ENCODE measurements at regions of chr20 and their contacts with region 1.

Region 1: DNA sequence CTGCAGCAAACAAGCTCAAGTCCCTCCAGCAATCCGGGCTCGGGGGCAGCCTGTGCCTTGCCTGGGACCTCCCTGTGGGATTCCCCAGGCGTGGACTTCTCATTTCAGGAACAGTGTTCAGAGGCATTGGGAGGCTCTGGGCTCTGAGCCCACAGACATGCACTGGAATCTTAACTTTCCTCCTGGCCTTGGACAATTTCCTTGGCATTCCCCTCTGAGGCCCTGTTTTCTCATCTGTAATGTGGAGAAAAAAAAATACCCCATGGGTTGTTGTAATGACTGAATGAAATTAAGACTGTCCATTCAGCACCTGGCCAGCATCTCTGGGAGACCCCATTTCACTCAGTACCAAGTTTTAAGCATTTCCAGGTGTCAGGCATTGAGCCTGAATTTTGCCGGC is 17.6 kb downstream of the BPIFB4 start:
- DNase-seq: no peak
- ATAC-seq: no peak
- H3K4me3 ChIP-seq: no peak overlapping the region
- H3K27ac ChIP-seq: no peak overlapping the region
- H3K4me1 ChIP-seq: no peaks in the 10 kb centered on the region
- H3K27me3 ChIP-seq: peaks cover 3% of the 10 kb centered on the region; the same call in 1 of the 2 replicates
- CTCF ChIP-seq: no peak

Region 2: DNA sequence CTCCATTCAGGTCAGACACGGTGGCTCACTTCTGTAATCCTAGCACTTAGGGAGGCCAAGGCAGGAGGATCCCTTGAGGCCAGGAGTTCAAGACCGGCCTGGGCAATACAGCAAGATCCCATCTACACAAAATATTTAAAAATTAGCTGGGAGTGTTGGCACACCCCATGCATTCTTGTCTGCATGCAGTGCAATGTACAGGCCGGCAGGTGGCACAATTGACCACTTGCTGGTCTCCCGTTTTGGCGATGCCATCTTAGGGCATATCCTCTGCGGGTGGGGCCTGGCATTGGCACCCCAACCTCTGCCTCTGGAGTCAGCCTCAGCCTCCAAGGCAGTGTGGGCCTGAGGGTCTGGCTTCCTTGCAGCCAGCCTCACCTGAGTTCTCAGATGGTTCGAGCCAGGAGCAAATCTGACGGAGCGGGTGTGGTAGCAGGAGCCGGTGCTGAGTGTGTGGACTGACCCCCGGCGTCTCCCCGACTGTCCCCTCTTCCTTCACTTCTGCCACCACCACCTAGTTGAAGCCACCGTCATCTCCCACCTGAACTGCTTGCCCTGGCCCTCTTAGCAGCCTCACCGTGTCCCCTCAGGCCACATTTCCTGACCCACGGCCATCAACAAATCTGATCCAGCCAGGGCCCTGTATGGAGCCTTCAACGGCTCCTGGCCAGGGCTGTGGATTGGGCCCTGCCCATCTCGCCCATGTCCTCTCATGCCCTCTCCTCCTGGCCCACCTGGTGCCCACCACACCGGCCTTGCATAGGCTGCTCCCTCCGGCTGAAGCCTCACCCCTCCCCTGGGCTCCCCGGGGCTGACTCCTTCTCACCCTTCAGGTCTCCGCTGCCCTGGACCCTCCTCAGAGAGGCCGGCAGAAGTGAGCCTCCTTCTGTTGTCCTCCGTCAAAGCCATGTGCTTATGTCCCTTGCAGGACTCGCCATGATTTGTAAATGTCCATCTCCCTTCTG is 194.3 kb before region 1 on chr20:
- CTCF ChIA-PET with region 1: interaction called, 12 read pairs
- POLR2A ChIA-PET with region 1: no interaction called
- in situ Hi-C with region 1: no loop called
- intact Hi-C with region 1: loop called (anchors 2 kb)
- DNase-seq: peak; percentile 24
- ATAC-seq: peak; percentile 85
- H3K4me3 ChIP-seq: no peak overlapping the region
- H3K27ac ChIP-seq: no peak overlapping the region
- H3K4me1 ChIP-seq: no peaks in the 10 kb centered on the region
- H3K27me3 ChIP-seq: no peaks in the 10 kb centered on the region
- CTCF ChIP-seq: peak; percentile 95

Region 3: DNA sequence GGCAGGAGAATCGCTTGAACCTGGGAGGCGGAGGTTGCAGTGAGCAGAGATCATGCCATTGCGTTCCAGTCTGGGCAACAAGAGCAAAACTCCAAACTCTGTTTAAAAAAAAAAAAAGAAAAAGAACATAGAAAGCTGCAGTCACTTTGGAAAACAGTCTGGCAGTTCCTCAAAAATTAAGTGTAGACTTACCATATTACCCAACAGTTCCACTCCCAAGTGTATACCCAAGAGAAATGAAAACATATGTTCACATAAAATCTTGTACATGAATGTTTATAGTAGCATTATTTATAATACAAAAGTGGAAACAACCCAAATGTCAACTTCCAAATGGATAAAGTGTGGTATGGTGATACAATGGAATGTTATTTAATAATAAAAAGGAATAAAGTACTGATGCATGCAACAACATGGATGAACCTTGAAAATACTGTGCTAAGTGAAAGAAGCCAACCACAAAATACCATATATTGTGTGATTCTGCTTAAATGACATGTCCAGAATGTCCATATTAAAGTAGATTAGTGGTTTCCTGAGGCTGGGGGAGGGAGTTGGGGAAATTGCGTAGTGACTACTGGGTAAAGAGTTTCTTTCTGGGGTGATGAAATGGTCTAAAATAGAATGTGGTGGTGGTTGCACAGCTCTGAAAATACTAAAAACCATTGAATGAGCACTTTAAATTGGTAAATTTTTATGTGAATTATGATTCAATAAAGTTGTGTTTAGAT is 155.7 kb before region 1 on chr20:
- CTCF ChIA-PET with region 1: no interaction called
- POLR2A ChIA-PET with region 1: no interaction called
- in situ Hi-C with region 1: no loop called
- intact Hi-C with region 1: no loop called
- DNase-seq: no peak
- ATAC-seq: no peak
- H3K4me3 ChIP-seq: no peak overlapping the region
- H3K27ac ChIP-seq: no peak overlapping the region
- H3K4me1 ChIP-seq: no peaks in the 10 kb centered on the region
- H3K27me3 ChIP-seq: no peaks in the 10 kb centered on the region
- CTCF ChIP-seq: no peak

Region 4: DNA sequence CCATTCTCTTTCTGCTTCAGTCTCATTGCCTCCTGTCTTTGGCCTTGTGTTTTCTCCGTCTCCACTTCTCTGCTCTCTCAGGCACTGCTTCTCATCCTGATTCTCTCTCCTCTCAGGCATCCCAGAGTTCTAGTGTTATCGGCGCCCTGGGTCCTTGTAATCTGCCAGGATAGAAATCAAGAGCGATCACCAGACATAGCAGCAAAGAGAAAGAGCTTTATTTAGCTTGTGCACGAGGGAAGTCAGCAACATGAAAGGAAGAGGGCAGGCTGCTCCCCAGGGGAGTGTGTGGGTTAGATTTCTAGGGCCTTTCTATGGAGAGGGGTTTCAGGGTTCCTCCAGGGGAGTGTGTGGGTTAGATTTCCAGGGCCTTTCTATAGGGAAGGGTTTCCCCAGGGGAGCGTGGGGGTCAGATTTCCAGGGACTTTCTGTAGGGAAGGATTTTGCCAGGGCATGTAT is 125.3 kb before region 1 on chr20:
- CTCF ChIA-PET with region 1: interaction called, 11 read pairs
- POLR2A ChIA-PET with region 1: no interaction called
- in situ Hi-C with region 1: no loop called
- intact Hi-C with region 1: no loop called
- DNase-seq: no peak
- ATAC-seq: no peak
- H3K4me3 ChIP-seq: no peak overlapping the region
- H3K27ac ChIP-seq: no peak overlapping the region
- H3K4me1 ChIP-seq: peaks cover 6% of the 10 kb centered on the region; the same call in 1 of the 2 replicates
- H3K27me3 ChIP-seq: no peaks in the 10 kb centered on the region
- CTCF ChIP-seq: no peak

Region 5: DNA sequence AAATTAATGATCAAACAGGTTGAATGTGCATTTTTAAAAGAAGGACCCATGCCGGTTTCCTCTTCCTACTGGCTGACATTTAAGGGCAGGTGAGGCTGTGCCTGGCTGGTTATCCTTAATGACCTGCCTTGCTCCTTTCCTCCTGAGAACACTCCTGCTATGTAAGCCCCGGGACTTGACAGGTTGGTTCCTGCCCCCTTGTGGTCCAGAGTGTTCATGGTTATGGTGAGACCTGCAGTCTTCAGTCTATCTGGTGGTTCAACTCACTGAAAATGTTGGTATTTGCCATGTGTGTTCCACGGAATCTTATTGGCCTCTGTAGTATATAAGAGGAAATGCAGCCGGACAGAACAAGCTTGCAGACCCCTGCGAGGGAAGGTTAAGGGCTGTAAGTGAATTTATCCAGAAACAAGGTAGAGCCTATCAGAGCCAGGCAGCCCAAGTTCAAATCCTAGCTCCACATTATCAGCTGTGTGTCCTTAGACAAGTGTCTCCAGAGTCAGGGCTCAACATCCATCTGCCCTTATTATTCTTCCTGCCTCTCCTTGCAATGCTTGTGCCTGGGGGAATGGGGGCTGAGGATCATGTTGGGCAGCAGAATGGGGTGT is 114.9 kb after region 1 on chr20:
- CTCF ChIA-PET with region 1: interaction called, 4 read pairs
- POLR2A ChIA-PET with region 1: no interaction called
- in situ Hi-C with region 1: no loop called
- intact Hi-C with region 1: loop called (anchors 1 kb)
- DNase-seq: peak; percentile 27
- ATAC-seq: peak; percentile 96
- H3K4me3 ChIP-seq: no peak overlapping the region
- H3K27ac ChIP-seq: no peak overlapping the region
- H3K4me1 ChIP-seq: no peaks in the 10 kb centered on the region
- H3K27me3 ChIP-seq: peaks cover 12% of the 10 kb centered on the region
- CTCF ChIP-seq: peak; percentile 79

Region 6: DNA sequence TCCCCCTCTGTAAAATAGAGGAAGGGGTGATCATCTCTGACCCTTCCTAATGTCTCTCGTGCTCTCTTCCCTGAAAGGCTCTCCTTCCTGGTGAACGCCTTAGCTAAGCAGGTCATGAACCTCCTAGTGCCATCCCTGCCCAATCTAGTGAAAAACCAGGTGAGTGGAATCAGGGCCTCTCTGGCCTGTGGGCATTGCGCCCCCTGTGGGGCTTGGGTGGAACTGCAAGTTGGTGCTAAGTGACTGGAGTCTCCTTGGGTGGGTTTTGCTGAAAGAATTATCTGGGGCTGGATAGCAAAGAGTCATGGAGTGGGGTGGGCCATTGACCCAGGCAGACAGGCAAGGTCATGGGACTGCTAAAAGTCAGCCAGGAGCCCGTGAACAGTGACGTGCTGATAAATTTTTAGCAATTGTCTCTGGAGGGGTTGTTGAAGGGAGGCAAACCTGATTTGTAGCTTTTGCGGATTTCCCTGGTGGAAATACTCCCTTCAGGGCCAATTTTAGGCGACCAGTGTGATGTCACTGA is 194.9 kb after region 1 on chr20:
- CTCF ChIA-PET with region 1: no interaction called
- POLR2A ChIA-PET with region 1: no interaction called
- in situ Hi-C with region 1: no loop called
- intact Hi-C with region 1: loop called (anchors 2 kb)
- DNase-seq: peak; percentile 42
- ATAC-seq: 0 out of 2 replicates have a peak, but pooled peaks have one; percentile 46
- H3K4me3 ChIP-seq: no peak overlapping the region
- H3K27ac ChIP-seq: no peak overlapping the region
- H3K4me1 ChIP-seq: no peaks in the 10 kb centered on the region
- H3K27me3 ChIP-seq: peaks cover 17% of the 10 kb centered on the region
- CTCF ChIP-seq: peak; percentile 96